ENCODE measurements at regions of chr14 and their contacts with region 1.

Region 1: DNA sequence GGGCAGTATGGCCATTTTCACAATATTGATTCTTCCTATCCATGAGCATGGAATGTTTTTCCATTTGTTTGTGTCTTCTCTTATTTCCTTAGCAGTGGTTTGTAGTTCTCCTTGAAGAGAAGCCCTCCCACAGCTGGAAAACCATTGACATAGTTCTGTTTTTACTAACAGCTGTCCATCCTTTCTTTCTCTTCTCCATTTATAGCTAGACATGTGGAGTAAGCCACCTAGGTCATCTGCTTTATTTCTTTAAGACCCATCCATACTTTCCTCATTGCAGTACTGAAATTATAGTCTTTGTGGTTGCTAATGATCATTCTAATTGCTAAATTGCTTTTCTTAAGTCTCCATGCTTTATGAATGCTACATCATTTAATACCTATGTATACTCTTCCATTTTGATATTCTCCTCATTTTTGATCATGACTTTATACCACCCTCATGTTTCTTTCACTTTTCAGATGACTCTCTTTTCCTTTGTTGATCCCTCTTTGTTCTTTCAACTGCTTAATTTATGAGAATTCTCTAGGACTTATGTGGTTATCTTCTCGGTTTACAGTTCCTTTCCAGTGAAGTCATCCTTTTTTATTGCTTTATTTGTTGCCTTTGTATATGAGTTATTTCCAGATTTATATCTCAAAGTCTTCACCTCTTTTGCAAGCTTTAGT is 114.2 kb downstream of the PCNX1 start:
- DNase-seq: peak; percentile 96
- ATAC-seq: peak; percentile 95
- H3K4me3 ChIP-seq: peak overlapping the region; percentile 27
- H3K27ac ChIP-seq: peak overlapping the region; percentile 84
- H3K4me1 ChIP-seq: peaks cover 22% of the 10 kb centered on the region
- H3K27me3 ChIP-seq: no peaks in the 10 kb centered on the region
- CTCF ChIP-seq: no peak

Region 2: GRCh38 chr14:70981000-70981952 is 40.2 kb before region 1 on chr14:
- CTCF ChIA-PET with region 1: no interaction called
- POLR2A ChIA-PET with region 1: no interaction called
- intact Hi-C with region 1: loop called (anchors 1 kb)
- DNase-seq: peak; percentile 41
- ATAC-seq: peak; percentile 93
- H3K4me3 ChIP-seq: no peak overlapping the region
- H3K27ac ChIP-seq: peak overlapping the region; percentile 39
- H3K4me1 ChIP-seq: peaks cover 8% of the 10 kb centered on the region; the same call in 1 of the 2 replicates
- H3K27me3 ChIP-seq: no peaks in the 10 kb centered on the region
- CTCF ChIP-seq: no peak

Region 3: GRCh38 chr14:71004481-71004880 is 17.0 kb before region 1 on chr14:
- CTCF ChIA-PET with region 1: no interaction called
- POLR2A ChIA-PET with region 1: no interaction called
- intact Hi-C with region 1: loop called (anchors 1 kb)
- DNase-seq: no peak
- ATAC-seq: no peak; the same call in 1 of the 2 replicates
- H3K4me3 ChIP-seq: no peak overlapping the region
- H3K27ac ChIP-seq: no peak overlapping the region
- H3K4me1 ChIP-seq: peaks cover 42% of the 10 kb centered on the region
- H3K27me3 ChIP-seq: no peaks in the 10 kb centered on the region
- CTCF ChIP-seq: no peak

Region 4: GRCh38 chr14:71103662-71104484 is 82.4 kb after region 1 on chr14:
- CTCF ChIA-PET with region 1: no interaction called
- POLR2A ChIA-PET with region 1: no interaction called
- intact Hi-C with region 1: no loop called
- DNase-seq: peak; percentile 78
- ATAC-seq: peak; percentile 89
- H3K4me3 ChIP-seq: no peak overlapping the region
- H3K27ac ChIP-seq: no peak overlapping the region
- H3K4me1 ChIP-seq: peaks cover 7% of the 10 kb centered on the region; the same call in 1 of the 2 replicates
- H3K27me3 ChIP-seq: no peaks in the 10 kb centered on the region
- CTCF ChIP-seq: peak; percentile 96

Region 5: DNA sequence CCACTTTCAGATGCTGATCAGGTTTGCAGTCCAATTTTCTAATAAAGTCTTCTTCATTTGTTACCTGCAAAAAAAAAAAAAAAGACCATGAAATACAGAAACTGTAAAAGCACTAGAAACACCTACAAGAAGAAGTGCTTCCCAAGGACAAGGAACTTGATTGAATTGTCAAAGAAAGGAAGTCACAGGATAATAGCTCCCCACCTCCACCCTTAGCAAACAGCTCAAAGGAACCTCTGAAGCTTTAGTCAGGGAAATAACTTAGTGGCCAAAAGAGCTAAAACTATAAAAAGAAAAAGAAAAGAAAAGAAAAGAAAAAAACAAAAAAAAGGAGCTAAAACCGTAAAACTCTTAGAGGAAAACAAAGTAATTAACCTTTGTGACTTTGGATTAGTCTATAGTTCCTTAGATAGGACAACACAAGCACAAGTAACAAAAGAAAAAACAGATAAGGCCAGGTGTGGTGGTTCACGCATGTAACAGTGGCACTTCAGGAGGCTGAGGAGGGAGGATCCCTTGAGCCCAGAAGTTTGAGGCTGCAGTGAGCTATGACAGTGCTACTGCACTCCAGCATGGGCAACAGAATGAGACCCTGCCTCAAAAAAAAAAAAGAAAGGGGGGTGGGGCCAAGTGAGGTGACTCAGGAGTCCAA is 1976.9 kb after region 1 on chr14:
- CTCF ChIA-PET with region 1: no interaction called
- POLR2A ChIA-PET with region 1: interaction called, 13 read pairs
- intact Hi-C with region 1: no loop called
- DNase-seq: no peak
- ATAC-seq: peak; percentile 55; the same call in 1 of the 2 replicates
- H3K4me3 ChIP-seq: no peak overlapping the region
- H3K27ac ChIP-seq: no peak overlapping the region
- H3K4me1 ChIP-seq: no peaks in the 10 kb centered on the region
- H3K27me3 ChIP-seq: no peaks in the 10 kb centered on the region
- CTCF ChIP-seq: no peak

Measured in PC-3 (cell line).